Heart right ventricle (tissue), 16 donors: ENCODE measurements at regions of chr16 and their contacts with region 1.

Region 1: GRCh38 chr16:2980227-2981086 is at the start of gene PKMYT1:
- DNase-seq: peak; percentile 89 to 94
- ATAC-seq: peak; percentile 94 to 98 (median 95)
- H3K4me3 ChIP-seq: peak within 1 kb of the TSS; percentile 54 to 89 (median 80)
- H3K27ac ChIP-seq: peak within 1 kb of the TSS; percentile 9 to 97 (median 88)
- H3K4me1 ChIP-seq: peaks cover 2 to 39% (median 28%) of the 10 kb centered on the region in 9 donors
- H3K27me3 ChIP-seq: peaks cover 0 to 12% (median 7%) of the 10 kb centered on the region in 7 donors
- CTCF ChIP-seq: no peak
- total RNA-seq, gene PKMYT1: 0.34 to 4.2 (median 0.66) TPM in 9 of 10 donors, not detected in the other

Region 2: DNA sequence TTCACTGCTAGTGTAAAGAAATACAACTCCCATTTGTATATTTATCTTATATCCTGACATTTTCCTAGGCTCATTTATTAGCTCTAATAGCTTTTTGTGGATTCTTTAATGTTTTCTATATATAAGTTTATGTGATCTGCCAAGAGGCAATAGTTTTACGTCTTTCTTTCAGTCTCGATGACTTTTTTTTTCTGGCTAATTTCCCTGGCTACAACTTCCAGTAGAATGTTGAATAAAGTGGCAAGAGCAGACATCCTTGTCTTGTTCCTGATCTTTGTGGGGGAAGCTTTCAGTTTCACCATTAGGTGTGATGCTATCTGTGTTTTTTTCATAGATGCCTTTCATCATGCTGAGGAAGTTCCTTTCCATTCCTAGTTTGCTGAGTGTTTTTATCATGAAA is 596.0 kb before region 1 on chr16:
- intact Hi-C with region 1: no loop called
- DNase-seq: no peak
- ATAC-seq: no peak
- H3K4me3 ChIP-seq: no peak overlapping the region
- H3K27ac ChIP-seq: no peak overlapping the region
- H3K4me1 ChIP-seq: no peaks in the 10 kb centered on the region
- H3K27me3 ChIP-seq: peaks cover 0 to 5% (median 0%) of the 10 kb centered on the region in 7 donors
- CTCF ChIP-seq: no peak

Region 3: GRCh38 chr16:2926650-2927646 is 53.5 kb before region 1 on chr16:
- intact Hi-C with region 1: loop called in 1 of 10 experiments (anchors 5 kb)
- DNase-seq: peak; percentile 82 to 84
- ATAC-seq: peak; percentile 80 to 93 (median 89)
- H3K4me3 ChIP-seq: peak overlapping the region in 6 of 10 donors; percentile 22 to 33 (median 30)
- H3K27ac ChIP-seq: no peak overlapping the region
- H3K4me1 ChIP-seq: peaks cover 0 to 11% (median 9%) of the 10 kb centered on the region in 9 donors
- H3K27me3 ChIP-seq: no peaks in the 10 kb centered on the region
- CTCF ChIP-seq: peak; percentile 93 to 99 (median 95)

Region 4: GRCh38 chr16:2948807-2949738 is 31.4 kb before region 1 on chr16:
- intact Hi-C with region 1: no loop called
- DNase-seq: no peak
- ATAC-seq: peak in 2 of 8 donors; percentile 10 to 18
- H3K4me3 ChIP-seq: no peak overlapping the region
- H3K27ac ChIP-seq: no peak overlapping the region
- H3K4me1 ChIP-seq: no peaks in the 10 kb centered on the region
- H3K27me3 ChIP-seq: peaks cover 0 to 3% (median 0%) of the 10 kb centered on the region in 7 donors
- CTCF ChIP-seq: no peak

Region 5: GRCh38 chr16:2963723-2964474 is 16.6 kb before region 1 on chr16 and contains the start of gene KREMEN2:
- intact Hi-C with region 1: loop called in 1 of 10 experiments (anchors 2 kb)
- DNase-seq: no peak
- ATAC-seq: no peak
- H3K4me3 ChIP-seq: peak within 1 kb of the TSS in 9 of 10 donors; percentile 8 to 42 (median 41)
- H3K27ac ChIP-seq: no peak within 1 kb of the TSS
- H3K4me1 ChIP-seq: peaks cover 16 to 57% (median 43%) of the 10 kb centered on the region in 9 donors
- H3K27me3 ChIP-seq: peaks cover 60 to 97% (median 91%) of the 10 kb centered on the region in 7 donors
- CTCF ChIP-seq: no peak
- total RNA-seq, gene KREMEN2: not detected